Natural killer cell (primary cell): ENCODE measurements at regions of chr10 and their contacts with region 1.

Region 1: DNA sequence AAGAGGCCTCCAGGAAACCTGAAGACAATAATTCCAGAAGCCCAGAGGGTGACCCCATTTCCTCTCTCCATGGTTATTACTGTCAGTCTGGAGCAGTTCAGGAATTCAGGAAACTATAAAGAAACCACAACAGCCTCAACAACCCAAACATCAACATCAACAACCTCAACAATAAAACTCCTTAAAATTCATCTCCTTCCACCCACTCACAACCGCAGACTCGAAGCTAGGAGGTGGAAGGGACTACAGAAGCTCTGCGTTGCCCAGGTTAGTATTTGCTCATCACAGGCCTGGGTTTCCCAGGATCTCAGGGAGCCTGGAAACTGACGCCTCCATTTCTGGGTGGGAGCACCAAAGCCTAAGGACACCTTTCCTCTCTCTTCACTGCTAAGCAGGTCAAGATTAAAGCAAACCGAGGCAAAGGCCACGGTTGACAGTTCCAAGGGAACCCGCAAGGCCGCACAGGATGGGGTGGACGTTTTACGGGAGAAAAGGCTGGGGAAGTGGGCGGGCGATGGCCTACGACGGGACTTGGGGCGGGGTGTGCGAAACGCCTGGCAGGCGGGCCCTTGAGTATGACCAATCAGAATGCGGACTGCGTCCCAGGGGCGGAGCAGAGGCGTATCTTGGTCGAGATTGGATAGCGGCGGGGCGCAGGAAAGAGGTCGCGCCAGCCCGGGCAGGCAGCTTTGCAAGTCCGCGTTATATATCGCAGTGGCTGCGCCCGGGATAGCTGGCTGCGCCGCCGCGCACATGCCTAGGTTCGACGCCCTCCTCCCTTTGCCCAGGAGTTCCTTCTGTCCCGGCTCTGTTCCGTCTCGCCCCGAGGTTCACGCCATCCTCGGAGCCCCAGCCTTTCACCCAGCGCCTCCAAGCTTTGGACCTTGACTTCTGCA is at the start of gene ELOVL3:
- DNase-seq: peak; percentile 77 to 93
- ATAC-seq: peak; percentile 91 to 95 (median 93)
- H3K4me3 ChIP-seq: no peak within 1 kb of the TSS
- H3K4me3 Mint-ChIP-seq: peak within 1 kb of the TSS; percentile 69
- H3K27ac ChIP-seq: no peak within 1 kb of the TSS
- H3K27ac Mint-ChIP-seq: peak within 1 kb of the TSS in 1 of 2 donors; percentile 63
- H3K4me1 ChIP-seq: peaks cover 24% of the 10 kb centered on the region
- H3K4me1 Mint-ChIP-seq: peaks cover 21 to 32% of the 10 kb centered on the region in 2 donors
- H3K27me3 ChIP-seq: peaks cover 30% of the 10 kb centered on the region
- H3K27me3 Mint-ChIP-seq: peaks cover 10 to 38% of the 10 kb centered on the region in 2 donors
- CTCF ChIP-seq: no peak
- total RNA-seq, gene ELOVL3: not detected

Region 2: DNA sequence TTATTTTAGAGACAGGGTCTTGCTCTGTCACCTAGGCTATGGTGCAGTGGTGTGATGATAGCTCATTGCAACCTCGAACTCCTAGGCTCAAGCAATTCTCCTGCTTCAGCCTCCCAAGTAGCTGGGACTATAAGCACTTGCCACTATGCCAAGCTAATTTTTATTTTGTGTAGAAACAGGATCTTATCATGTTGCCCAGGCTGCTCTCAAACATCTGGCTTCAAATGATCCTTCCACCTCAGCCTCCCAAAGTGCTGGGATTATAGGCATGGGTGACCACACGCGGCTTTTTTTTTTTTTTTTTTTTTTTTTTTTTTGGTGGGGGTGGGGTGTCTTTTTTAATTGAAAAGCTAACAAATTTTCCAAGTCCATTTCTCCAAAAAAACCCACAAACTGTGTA is 142.4 kb before region 1 on chr10:
- intact Hi-C with region 1: no loop called
- DNase-seq: no peak
- ATAC-seq: no peak
- H3K4me3 ChIP-seq: no peak overlapping the region
- H3K4me3 Mint-ChIP-seq: no peak overlapping the region
- H3K27ac ChIP-seq: no peak overlapping the region
- H3K27ac Mint-ChIP-seq: no peak overlapping the region
- H3K4me1 ChIP-seq: no peaks in the 10 kb centered on the region
- H3K4me1 Mint-ChIP-seq: no peaks in the 10 kb centered on the region
- H3K27me3 ChIP-seq: no peaks in the 10 kb centered on the region
- H3K27me3 Mint-ChIP-seq: no peaks in the 10 kb centered on the region
- CTCF ChIP-seq: no peak

Region 3: GRCh38 chr10:102152545-102152890 is 73.4 kb before region 1 on chr10:
- intact Hi-C with region 1: no loop called
- DNase-seq: no peak
- ATAC-seq: peak; percentile 26 to 47 (median 27)
- H3K4me3 ChIP-seq: peak overlapping the region; percentile 90
- H3K4me3 Mint-ChIP-seq: peak overlapping the region; percentile 93
- H3K27ac ChIP-seq: peak overlapping the region; percentile 97
- H3K27ac Mint-ChIP-seq: peak overlapping the region; percentile 93 to 97
- H3K4me1 ChIP-seq: peaks cover 24% of the 10 kb centered on the region
- H3K4me1 Mint-ChIP-seq: peaks cover 20 to 37% of the 10 kb centered on the region in 2 donors
- H3K27me3 ChIP-seq: no peaks in the 10 kb centered on the region
- H3K27me3 Mint-ChIP-seq: no peaks in the 10 kb centered on the region
- CTCF ChIP-seq: no peak

Region 4: DNA sequence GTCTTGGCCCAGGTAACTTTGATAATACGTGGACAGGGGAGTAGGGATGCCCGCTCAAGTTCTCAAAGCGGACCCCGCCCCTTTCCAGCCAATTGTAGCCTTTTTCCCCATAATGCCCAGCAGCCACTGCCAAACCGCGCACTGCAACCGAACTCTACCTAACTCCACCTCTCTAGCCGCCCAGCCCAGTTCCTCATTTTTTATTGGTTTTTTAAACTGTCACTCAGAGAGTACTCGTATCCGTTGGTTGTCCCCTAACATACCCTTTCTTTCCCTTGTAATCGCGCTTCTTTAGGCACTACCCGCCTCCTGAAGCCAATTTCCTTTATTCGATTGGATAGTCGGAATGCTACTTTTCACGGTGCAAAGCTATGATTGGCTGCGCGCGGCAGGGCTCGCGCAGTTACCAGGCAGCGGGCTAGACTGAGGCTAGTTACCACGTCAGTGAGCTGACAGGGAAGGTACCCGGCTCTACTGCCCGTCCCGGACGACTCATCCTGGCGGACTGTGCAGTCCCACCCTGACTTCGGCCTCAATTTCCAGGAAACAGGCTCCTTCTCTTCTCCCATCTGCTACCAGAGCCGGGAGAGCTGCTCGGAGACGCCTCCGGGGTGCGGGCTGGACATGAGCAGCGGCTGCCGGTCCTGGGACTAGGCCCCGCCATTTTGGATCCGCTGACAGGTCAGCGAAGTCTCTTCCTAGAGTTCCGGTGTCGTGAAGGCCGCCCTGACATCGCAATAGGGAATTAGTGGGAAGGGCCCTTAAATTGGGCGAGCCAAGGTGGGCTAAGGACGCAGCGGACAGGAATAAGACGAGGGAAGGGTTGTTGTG is 19.4 kb after region 1 on chr10 and contains the start of gene GBF1:
- intact Hi-C with region 1: loop called (anchors 1 kb)
- DNase-seq: peak; percentile 88 to 97
- ATAC-seq: peak; percentile 80 to 94 (median 84)
- H3K4me3 ChIP-seq: peak within 1 kb of the TSS; percentile 94
- H3K4me3 Mint-ChIP-seq: peak within 1 kb of the TSS; percentile 98
- H3K27ac ChIP-seq: peak within 1 kb of the TSS; percentile 89
- H3K27ac Mint-ChIP-seq: peak within 1 kb of the TSS; percentile 98 to 99
- H3K4me1 ChIP-seq: peaks cover 31% of the 10 kb centered on the region
- H3K4me1 Mint-ChIP-seq: peaks cover 47 to 60% of the 10 kb centered on the region in 2 donors
- H3K27me3 ChIP-seq: peaks cover 15% of the 10 kb centered on the region
- H3K27me3 Mint-ChIP-seq: peaks cover 7 to 19% of the 10 kb centered on the region in 2 donors
- CTCF ChIP-seq: no peak
- total RNA-seq, gene GBF1: 48.2 to 52.5 (median 50.9) TPM

Region 5: GRCh38 chr10:102352066-102352715 is 126.3 kb after region 1 on chr10:
- intact Hi-C with region 1: loop called (anchors 1 kb)
- DNase-seq: peak; percentile 59 to 85
- ATAC-seq: peak; percentile 76 to 91 (median 81)
- H3K4me3 ChIP-seq: no peak overlapping the region
- H3K4me3 Mint-ChIP-seq: no peak overlapping the region
- H3K27ac ChIP-seq: no peak overlapping the region
- H3K27ac Mint-ChIP-seq: no peak overlapping the region
- H3K4me1 ChIP-seq: no peaks in the 10 kb centered on the region
- H3K4me1 Mint-ChIP-seq: no peaks in the 10 kb centered on the region
- H3K27me3 ChIP-seq: no peaks in the 10 kb centered on the region
- H3K27me3 Mint-ChIP-seq: no peaks in the 10 kb centered on the region
- CTCF ChIP-seq: peak; percentile 90

Region 6: DNA sequence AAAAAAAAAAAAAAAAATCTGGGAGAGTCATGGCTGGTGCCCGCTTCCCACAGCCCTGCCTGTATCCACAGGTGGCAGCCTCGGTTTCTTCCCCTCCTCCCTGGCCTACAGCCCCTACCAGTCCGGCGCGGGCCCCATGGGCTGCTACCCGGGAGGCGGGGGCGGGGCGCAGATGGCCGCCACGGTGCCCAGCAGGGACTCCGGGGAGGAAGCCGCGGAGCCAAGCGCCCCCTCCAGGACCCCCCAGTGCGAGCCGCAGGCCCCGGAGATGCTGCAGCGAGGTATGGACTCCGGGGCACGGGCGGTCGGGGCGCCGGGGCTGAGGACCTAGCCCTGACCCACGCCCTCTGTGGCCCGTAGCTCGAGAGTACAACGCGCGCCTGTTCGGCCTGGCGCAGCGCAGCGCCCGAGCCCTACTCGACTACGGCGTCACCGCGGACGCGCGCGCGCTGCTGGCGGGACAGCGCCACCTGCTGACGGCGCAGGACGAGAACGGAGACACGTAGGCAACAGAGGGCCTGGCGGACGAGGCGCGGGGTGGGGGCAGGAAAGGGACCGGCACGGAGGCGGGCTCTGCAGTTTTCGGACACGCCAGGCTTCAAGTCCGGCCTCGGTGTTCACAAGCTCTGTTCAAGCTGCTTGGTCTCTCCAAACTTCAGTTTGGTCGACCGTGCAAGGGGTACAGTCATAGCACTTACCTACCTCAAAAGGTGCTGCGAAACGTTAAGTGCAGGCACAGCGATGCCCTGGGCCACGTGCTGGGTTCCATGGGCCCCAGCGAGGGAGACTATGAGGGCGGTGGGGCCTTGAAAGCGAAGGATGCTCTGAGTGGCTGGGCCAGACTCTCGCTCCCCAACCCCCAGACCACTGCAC is 173.6 kb after region 1 on chr10:
- intact Hi-C with region 1: loop called (anchors 2 kb)
- DNase-seq: peak; percentile 93 to 95
- ATAC-seq: peak; percentile 57 to 79 (median 57)
- H3K4me3 ChIP-seq: peak overlapping the region; percentile 33
- H3K4me3 Mint-ChIP-seq: peak overlapping the region; percentile 81
- H3K27ac ChIP-seq: peak overlapping the region; percentile 79
- H3K27ac Mint-ChIP-seq: peak overlapping the region; percentile 99
- H3K4me1 ChIP-seq: peaks cover 43% of the 10 kb centered on the region
- H3K4me1 Mint-ChIP-seq: peaks cover 21 to 37% of the 10 kb centered on the region in 2 donors
- H3K27me3 ChIP-seq: no peaks in the 10 kb centered on the region
- H3K27me3 Mint-ChIP-seq: no peaks in the 10 kb centered on the region
- CTCF ChIP-seq: peak; percentile 87

Region 7: GRCh38 chr10:102476466-102477141 is 250.7 kb after region 1 on chr10:
- intact Hi-C with region 1: loop called (anchors 1 kb)
- DNase-seq: peak in 1 of 2 donors; percentile 54
- ATAC-seq: no peak
- H3K4me3 ChIP-seq: no peak overlapping the region
- H3K4me3 Mint-ChIP-seq: no peak overlapping the region
- H3K27ac ChIP-seq: no peak overlapping the region
- H3K27ac Mint-ChIP-seq: peak overlapping the region in 1 of 2 donors; percentile 36
- H3K4me1 ChIP-seq: peaks cover 14% of the 10 kb centered on the region
- H3K4me1 Mint-ChIP-seq: peaks cover 6 to 15% of the 10 kb centered on the region in 2 donors
- H3K27me3 ChIP-seq: no peaks in the 10 kb centered on the region
- H3K27me3 Mint-ChIP-seq: no peaks in the 10 kb centered on the region
- CTCF ChIP-seq: no peak

Region 8: GRCh38 chr10:102583435-102584417 is 357.8 kb after region 1 on chr10:
- intact Hi-C with region 1: loop called (anchors 1 kb)
- DNase-seq: peak; percentile 69 to 91
- ATAC-seq: peak; percentile 91 to 99 (median 98)
- H3K4me3 ChIP-seq: no peak overlapping the region
- H3K4me3 Mint-ChIP-seq: no peak overlapping the region
- H3K27ac ChIP-seq: no peak overlapping the region
- H3K27ac Mint-ChIP-seq: no peak overlapping the region
- H3K4me1 ChIP-seq: peaks cover 4% of the 10 kb centered on the region
- H3K4me1 Mint-ChIP-seq: peaks cover 0 to 1% of the 10 kb centered on the region in 2 donors
- H3K27me3 ChIP-seq: no peaks in the 10 kb centered on the region
- H3K27me3 Mint-ChIP-seq: no peaks in the 10 kb centered on the region
- CTCF ChIP-seq: peak; percentile 88